HEK293 (cell line): ENCODE measurements at regions of chr2 and their contacts with region 1.

Region 1: GRCh38 chr2:85354286-85355072 is at the starts of genes ELMOD3 and RETSAT:
- H3K4me3 ChIP-seq: peak within 1 kb of the TSS; percentile 75
- H3K27ac ChIP-seq: peak within 1 kb of the TSS; percentile 66
- H3K4me1 ChIP-seq: no peaks in the 10 kb centered on the region; the same call in 1 of the 2 replicates
- CTCF ChIP-seq: no peak

Region 2: GRCh38 chr2:84925724-84926376 is 428.6 kb before region 1 on chr2:
- CTCF ChIA-PET with region 1: no interaction called
- POLR2A ChIA-PET with region 1: no interaction called
- H3K4me3 ChIP-seq: peak overlapping the region; percentile 20
- H3K27ac ChIP-seq: no peak overlapping the region
- H3K4me1 ChIP-seq: no peaks in the 10 kb centered on the region
- CTCF ChIP-seq: peak; percentile 99

Region 3: GRCh38 chr2:85327822-85328617 is 26.5 kb before region 1 on chr2 and contains the start of gene TGOLN2:
- CTCF ChIA-PET with region 1: interaction called, 3 read pairs
- POLR2A ChIA-PET with region 1: interaction called, 28 read pairs
- H3K4me3 ChIP-seq: peak within 1 kb of the TSS; percentile 85
- H3K27ac ChIP-seq: peak within 1 kb of the TSS; percentile 93
- H3K4me1 ChIP-seq: no peaks in the 10 kb centered on the region
- CTCF ChIP-seq: peak; percentile 83

Region 4: GRCh38 chr2:85367180-85367579 is 12.7 kb after region 1 on chr2:
- CTCF ChIA-PET with region 1: interaction called, 3 read pairs
- POLR2A ChIA-PET with region 1: interaction called, 12 read pairs
- H3K4me3 ChIP-seq: no peak overlapping the region
- H3K27ac ChIP-seq: no peak overlapping the region
- H3K4me1 ChIP-seq: 0 out of 2 replicates have a peak, but pooled peaks cover 3% of the 10 kb centered on the region
- CTCF ChIP-seq: no peak

Region 5: DNA sequence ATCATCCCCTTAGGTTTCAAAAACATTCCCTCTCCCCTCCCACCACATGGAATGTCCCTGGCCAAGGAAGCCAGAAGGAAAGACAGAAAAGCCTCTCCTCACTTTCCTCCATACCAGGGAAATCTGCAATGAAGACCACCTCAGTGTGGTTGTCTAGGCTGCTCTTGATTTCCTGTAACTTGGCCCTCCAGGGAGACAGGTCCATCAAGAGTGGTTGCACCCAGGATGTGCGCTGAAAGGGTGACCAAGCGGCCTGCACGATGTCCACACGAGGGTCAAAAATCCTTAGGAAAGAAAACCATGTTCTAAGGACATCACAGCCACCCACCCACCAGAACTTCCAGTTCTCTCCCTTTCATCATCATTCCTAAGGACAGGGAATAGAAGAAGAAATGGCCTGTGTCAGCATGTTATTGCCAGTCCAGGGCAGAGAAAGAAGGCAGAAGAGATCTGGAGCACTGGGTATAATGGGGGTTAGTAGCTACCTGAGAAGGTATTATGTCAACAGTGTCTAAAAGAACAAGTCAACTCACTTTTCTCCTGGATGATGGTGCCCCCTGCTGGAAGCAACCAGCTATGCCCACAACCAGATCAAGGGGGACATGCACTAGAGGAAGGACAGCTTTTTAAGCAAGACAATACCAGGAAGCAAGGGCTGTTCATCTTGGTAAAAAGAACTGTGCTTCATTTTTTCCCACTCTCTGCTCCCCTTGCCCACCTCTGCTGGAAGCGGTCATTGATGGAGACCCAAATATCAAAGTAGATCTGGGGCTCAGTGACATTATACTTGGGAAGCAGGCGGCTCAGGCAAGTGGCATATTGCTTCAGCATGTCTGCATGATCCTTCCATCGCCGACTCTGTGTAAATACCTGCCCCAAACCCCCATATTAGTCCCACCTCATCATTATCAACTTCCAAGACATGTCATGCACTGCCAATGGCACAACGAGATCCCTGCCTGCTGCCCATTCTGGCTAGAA is 197.5 kb after region 1 on chr2:
- CTCF ChIA-PET with region 1: interaction called, 6 read pairs
- POLR2A ChIA-PET with region 1: interaction called, 11 read pairs
- H3K4me3 ChIP-seq: no peak overlapping the region
- H3K27ac ChIP-seq: no peak overlapping the region
- H3K4me1 ChIP-seq: no peaks in the 10 kb centered on the region
- CTCF ChIP-seq: peak; percentile 69

Region 6: DNA sequence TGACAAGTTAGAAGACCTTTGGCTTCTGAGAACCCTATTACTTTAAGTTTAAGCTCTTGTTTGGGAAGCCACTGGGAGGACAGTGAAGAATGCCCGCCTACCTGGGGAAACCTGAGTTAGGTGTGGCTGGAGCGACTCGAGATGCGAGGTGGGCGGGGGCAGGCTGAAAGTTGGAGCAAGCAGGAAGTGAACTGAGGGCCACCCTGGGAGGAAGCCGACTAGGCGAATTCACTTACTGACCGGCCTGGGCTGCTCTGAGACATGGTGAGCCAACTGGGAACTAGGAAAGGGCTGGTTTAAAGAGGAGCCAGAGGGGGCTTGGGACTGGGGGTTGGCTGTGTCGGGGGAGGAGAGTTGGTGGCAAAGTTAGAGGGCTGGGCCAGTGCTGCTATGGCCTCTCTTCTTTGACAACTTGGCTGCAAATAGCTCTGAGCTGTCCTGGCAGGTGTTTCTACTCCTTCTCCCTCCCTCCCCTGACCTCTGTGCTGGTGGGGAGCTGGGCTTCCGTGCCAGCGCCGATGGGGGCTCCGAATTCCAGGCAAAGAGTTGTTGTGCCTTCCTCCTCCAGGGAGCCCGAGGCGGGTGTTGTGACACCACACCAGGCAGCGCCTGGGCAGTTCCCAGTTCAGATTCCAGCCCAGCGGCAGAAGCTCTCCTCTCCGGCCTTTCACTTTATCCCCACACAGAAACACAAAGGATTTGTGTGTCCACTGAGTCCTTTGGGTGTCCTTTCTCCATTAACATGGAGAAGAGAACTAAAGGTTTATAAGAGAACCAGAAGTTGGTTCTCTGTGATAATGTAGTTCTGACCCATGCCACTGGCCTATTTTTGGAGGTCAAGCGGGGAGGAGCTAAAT is 223.1 kb after region 1 on chr2 and contains the start of gene VAMP8:
- CTCF ChIA-PET with region 1: no interaction called
- POLR2A ChIA-PET with region 1: interaction called, 12 read pairs
- H3K4me3 ChIP-seq: peak within 1 kb of the TSS; percentile 55
- H3K27ac ChIP-seq: peak within 1 kb of the TSS; percentile 56
- H3K4me1 ChIP-seq: peaks cover 14% of the 10 kb centered on the region
- CTCF ChIP-seq: no peak